CD8-positive, alpha-beta memory T cell (primary cell): ENCODE measurements at regions of chr14 and their contacts with region 1.

Region 1: GRCh38 chr14:44912041-44912869 is 49.5 kb downstream of the KLHL28 start:
- DNase-seq: no peak
- H3K4me3 ChIP-seq: no peak overlapping the region
- H3K4me3 Mint-ChIP-seq: peak overlapping the region in 3 of 7 donors; percentile 29 to 43 (median 41)
- H3K27ac ChIP-seq: no peak overlapping the region
- H3K27ac Mint-ChIP-seq: no peak overlapping the region
- H3K4me1 ChIP-seq: no peaks in the 10 kb centered on the region
- H3K4me1 Mint-ChIP-seq: peaks cover 3 to 11% (median 6%) of the 10 kb centered on the region in 3 donors
- H3K27me3 ChIP-seq: peaks cover 17% of the 10 kb centered on the region
- H3K27me3 Mint-ChIP-seq: peaks cover 29 to 32% of the 10 kb centered on the region in 2 donors

Region 2: GRCh38 chr14:45267071-45267470 is 354.8 kb after region 1 on chr14:
- CTCF ChIA-PET with region 1: interaction called, 21 read pairs
- POLR2A ChIA-PET with region 1: no interaction called
- DNase-seq: no peak
- H3K4me3 ChIP-seq: no peak overlapping the region
- H3K4me3 Mint-ChIP-seq: no peak overlapping the region
- H3K27ac ChIP-seq: no peak overlapping the region
- H3K27ac Mint-ChIP-seq: no peak overlapping the region
- H3K4me1 ChIP-seq: no peaks in the 10 kb centered on the region
- H3K4me1 Mint-ChIP-seq: no peaks in the 10 kb centered on the region
- H3K27me3 ChIP-seq: no peaks in the 10 kb centered on the region
- H3K27me3 Mint-ChIP-seq: peaks cover 1 to 3% of the 10 kb centered on the region in 2 donors